ENCODE measurements at regions of chr9 and their contacts with region 1.

Region 1: DNA sequence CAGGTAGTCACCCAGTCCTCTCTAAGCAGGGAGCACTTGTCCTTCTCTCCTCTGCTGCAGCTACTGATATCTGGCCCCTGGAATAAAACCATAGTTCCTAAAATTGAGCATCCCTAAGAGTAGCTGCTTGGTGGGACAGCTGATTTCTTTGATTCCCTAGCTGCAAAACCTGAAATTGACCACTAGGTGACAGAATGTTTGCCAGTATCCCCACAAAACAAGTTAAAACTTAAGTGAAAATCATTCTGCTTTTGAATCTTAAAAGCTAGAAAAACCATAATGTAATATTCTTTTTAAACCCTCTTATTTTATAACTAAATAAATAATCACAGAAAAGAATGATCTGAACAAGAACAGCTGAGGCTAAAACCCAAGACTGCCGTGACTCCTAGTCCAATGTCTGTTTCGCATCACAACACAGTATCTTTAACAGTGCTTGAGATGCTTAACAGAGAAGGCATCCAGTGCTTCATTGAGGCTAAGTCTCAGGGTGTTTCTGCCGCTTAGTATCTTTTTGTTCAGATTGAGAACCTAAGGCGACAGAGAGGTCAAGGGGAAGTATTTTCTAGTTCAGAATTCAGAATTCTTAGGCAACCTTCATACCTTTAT is 24.4 kb upstream of the TAL2 start:
- DNase-seq: no peak
- ATAC-seq: no peak
- H3K4me3 ChIP-seq: no peak overlapping the region
- H3K27ac ChIP-seq: no peak overlapping the region
- H3K4me1 ChIP-seq: peaks cover 3% of the 10 kb centered on the region
- H3K27me3 ChIP-seq: no peaks in the 10 kb centered on the region
- CTCF ChIP-seq: peak; percentile 30

Region 2: GRCh38 chr9:105500108-105500766 is 137.7 kb before region 1 on chr9:
- intact Hi-C with region 1: no loop called
- DNase-seq: no peak
- ATAC-seq: no peak
- H3K4me3 ChIP-seq: no peak overlapping the region
- H3K27ac ChIP-seq: no peak overlapping the region
- H3K4me1 ChIP-seq: peaks cover 9% of the 10 kb centered on the region
- H3K27me3 ChIP-seq: no peaks in the 10 kb centered on the region
- CTCF ChIP-seq: no peak

Region 3: DNA sequence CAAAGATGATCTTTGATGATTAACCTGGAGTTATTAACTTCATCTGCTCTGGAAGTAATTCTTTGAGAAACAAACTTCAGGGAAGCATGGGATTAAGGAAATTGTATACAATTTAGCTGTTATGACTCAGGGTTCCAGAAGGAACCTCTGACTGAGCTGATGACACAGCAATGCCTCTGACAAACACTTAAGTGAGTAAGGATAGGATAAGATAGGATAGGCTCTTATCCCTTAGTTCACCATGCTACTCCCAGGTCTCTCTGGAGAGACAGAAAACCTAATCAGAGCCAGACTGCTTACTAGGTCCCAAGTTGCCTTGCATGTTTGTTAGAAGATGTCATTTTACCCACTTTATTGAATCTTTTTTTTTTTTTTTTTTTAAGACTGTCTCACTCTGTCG is 43.8 kb after region 1 on chr9:
- intact Hi-C with region 1: loop called in 1 of 2 experiments (anchors 5 kb)
- DNase-seq: no peak
- ATAC-seq: peak in 1 of 4 donors; percentile 47
- H3K4me3 ChIP-seq: no peak overlapping the region
- H3K27ac ChIP-seq: no peak overlapping the region
- H3K4me1 ChIP-seq: peaks cover 18% of the 10 kb centered on the region
- H3K27me3 ChIP-seq: no peaks in the 10 kb centered on the region
- CTCF ChIP-seq: no peak